Activated T-helper 1 cell treated with anti-CD3 and anti-CD28 coated beads, Interleukin-12 subunit alpha, Interleukin-12 subunit beta, Interleukin-2, Interleukin-4 antibody, amounts not matched to agents 30 ng/mL and 10 ng/mL and 1 ng/mL, durations not matched to agents 14 hours and 24 hours and 36 hours (primary cell): ENCODE measurements at regions of chr6 and their contacts with region 1.

Region 1: DNA sequence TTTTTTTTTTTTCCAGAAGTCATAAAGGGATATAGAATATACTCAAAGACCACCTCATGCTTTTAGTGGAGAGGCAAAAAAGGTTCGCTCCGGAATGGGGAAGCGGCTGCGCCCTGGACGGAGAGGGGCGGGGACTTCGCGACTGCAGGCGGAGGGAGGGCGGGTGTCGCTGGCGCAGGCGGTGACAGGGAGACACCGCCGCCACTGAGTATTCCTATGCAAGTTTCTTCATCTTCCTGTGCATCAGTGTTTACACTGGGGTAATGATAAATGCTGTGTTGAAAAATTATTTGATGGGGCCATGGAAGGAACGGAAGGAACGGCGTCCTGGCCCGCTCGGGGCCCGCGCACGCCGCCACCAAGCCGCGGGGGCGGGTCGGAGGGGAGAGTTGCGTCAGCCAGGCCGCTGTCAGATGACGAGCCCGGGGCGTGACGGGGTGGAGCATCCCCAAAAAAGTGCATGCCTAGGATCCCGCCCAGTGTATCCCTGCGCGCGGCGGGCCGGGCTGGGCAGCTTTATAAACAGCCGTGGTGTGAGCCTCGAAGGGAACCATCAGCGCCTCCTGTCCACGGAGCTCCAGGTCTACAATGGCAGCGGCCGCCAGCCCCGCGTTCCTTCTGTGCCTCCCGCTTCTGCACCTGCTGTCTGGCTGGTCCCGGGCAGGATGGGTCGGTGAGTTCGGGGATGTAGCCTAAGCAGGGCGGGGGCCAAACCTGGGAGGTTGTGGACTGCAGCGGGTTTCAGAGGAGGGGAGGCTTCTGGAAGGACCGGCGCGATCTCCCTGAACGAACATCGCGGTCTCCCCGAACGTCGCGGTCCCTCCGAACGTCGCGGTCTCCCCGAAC is at the start of gene ULBP1:
- DNase-seq: peak; percentile 80
- H3K4me3 Mint-ChIP-seq: peak within 1 kb of the TSS; percentile 91
- H3K27ac Mint-ChIP-seq: peak within 1 kb of the TSS; percentile 90
- H3K4me1 Mint-ChIP-seq: peaks cover 33% of the 10 kb centered on the region
- H3K27me3 Mint-ChIP-seq: peaks cover 75% of the 10 kb centered on the region
- total RNA-seq, gene ULBP1: 0.91 and 0.99 TPM in 2 replicates

Region 2: DNA sequence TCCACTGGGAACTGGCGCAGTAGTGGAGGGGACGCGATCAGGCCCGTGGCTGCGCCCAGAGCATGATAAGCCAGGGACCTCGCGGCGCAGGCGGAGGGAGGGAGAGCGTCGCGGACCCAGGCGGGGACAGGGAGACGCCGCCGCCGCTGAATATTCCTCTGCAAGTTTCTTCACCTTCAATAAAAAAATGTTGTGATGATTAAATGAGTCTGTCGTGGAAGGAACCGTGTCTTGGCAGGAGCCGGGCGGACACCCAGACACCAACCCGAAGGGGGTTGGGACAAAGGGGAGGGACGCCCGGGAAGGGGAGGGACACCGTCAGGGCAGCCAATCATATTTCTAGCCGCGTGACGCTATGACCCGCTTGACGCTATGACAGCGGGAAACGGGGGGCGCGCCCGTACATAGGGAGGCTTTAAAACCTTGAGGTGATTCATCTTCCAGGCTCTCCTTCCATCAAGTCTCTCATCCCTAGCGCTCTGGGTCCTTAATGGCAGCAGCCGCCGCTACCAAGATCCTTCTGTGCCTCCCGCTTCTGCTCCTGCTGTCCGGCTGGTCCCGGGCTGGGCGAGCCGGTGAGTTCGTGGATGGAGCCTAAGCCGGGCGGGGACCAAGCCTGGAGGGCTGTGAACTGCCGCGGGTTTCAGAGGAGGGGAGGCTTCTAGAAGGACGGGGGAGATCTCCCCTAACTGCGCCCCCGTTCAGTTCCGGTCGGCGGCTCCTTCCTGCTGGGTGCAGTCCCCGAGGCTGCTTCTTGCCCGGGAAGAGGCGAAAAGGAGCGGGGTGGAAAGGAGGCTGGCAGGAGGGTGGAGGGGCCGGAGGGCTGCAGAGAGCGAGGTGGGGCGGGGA is 21.9 kb before region 1 on chr6 and contains the start of gene ULBP2:
- intact Hi-C with region 1: loop called (anchors 1 kb)
- DNase-seq: peak; percentile 81
- H3K4me3 Mint-ChIP-seq: peak within 1 kb of the TSS; percentile 90
- H3K27ac Mint-ChIP-seq: peak within 1 kb of the TSS; percentile 84
- H3K4me1 Mint-ChIP-seq: peaks cover 42% of the 10 kb centered on the region
- H3K27me3 Mint-ChIP-seq: peaks cover 76% of the 10 kb centered on the region
- total RNA-seq, gene ULBP2: 0.32 and 0.65 TPM in 2 replicates